Sigmoid colon (tissue), 7 donors: ENCODE measurements at regions of chr3 and their contacts with region 1.

Region 1: DNA sequence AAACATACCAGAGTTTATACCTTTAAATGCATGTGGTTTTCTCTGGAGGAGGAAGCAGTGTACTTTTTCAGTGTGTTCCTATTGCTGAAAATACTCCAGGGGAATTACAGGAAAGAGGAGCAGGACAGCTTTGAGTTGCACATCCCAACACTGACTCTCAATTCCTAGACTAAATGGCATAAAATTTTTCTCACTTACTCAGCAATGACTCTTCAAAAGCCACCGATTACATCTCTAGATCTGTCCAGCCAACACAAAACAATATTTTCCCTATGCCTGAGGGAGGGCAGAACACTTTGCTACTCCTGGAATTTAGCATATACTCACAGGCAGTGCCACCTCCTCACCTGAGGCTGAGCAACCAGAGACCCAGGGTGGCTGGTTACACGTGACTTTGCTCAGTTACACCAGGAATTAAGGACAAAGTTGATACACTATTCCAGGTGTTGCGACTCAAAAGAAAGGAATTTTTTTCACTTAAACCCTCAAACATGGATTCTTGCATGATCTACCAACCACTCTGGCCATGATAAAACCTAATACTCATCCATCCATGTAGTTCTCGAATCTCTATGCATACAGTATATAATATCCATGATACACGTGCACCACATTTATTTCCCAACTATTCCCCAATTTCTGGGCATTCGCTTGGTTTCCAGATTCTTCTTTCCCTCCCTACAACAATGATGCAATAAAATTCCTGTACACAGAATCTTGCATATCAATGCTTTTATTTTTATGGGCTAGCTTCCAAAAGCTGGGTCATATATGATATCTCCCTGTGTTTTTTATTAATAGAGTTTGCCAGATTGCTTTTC is 194.6 kb downstream of the THRB start:
- DNase-seq: no peak
- H3K4me3 ChIP-seq: no peak overlapping the region
- H3K27ac ChIP-seq: peak overlapping the region in 2 of 4 donors; percentile 7 to 57
- H3K4me1 ChIP-seq: peaks cover 0 to 40% (median 33%) of the 10 kb centered on the region in 4 donors
- H3K27me3 ChIP-seq: no peaks in the 10 kb centered on the region
- CTCF ChIP-seq: no peak
- EP300 ChIP-seq: no peak
- POLR2A ChIP-seq: no peak

Region 2: GRCh38 chr3:24379945-24380344 is 79.9 kb after region 1 on chr3:
- intact Hi-C with region 1: loop called (anchors 5 kb)
- DNase-seq: no peak
- H3K4me3 ChIP-seq: no peak overlapping the region
- H3K27ac ChIP-seq: peak overlapping the region in 2 of 4 donors; percentile 21 to 22
- H3K4me1 ChIP-seq: peaks cover 0 to 66% (median 49%) of the 10 kb centered on the region in 4 donors
- H3K27me3 ChIP-seq: no peaks in the 10 kb centered on the region
- CTCF ChIP-seq: no peak
- EP300 ChIP-seq: no peak
- POLR2A ChIP-seq: no peak